CD8-positive, alpha-beta memory T cell (primary cell): ENCODE measurements at regions of chr19 and their contacts with region 1.

Region 1: DNA sequence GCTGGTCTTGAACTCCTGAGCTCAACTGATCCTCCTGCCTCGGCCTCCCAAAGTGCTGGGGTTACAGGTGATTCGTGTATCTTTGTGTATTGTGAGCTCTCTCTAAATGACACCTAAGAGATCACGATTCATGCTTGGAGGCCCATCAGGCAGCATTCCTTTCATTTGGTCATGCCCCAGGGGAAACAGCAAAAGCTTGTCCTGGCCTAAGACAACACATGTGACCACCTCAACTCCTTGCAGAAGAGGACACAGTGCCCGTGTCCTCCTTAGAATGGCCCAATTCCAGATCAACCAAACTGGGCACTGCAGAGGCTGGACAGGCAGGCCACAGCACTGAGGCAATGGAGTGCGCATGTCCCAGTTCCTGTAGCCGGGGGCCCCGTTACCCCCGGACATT is 32.5 kb downstream of the ZC3H4 start:
- DNase-seq: no peak
- H3K4me3 ChIP-seq: no peak overlapping the region
- H3K4me3 Mint-ChIP-seq: no peak overlapping the region
- H3K27ac ChIP-seq: no peak overlapping the region
- H3K27ac Mint-ChIP-seq: peak overlapping the region in 2 of 8 donors; percentile 35 to 46
- H3K4me1 ChIP-seq: no peaks in the 10 kb centered on the region
- H3K4me1 Mint-ChIP-seq: no peaks in the 10 kb centered on the region
- H3K27me3 ChIP-seq: no peaks in the 10 kb centered on the region
- H3K27me3 Mint-ChIP-seq: no peaks in the 10 kb centered on the region

Region 2: GRCh38 chr19:47124937-47125668 is 44.0 kb after region 1 on chr19:
- CTCF ChIA-PET with region 1: interaction called, 87 read pairs
- POLR2A ChIA-PET with region 1: interaction called, 3 read pairs
- DNase-seq: peak in 2 of 5 donors; percentile 39 to 52
- H3K4me3 ChIP-seq: no peak overlapping the region
- H3K4me3 Mint-ChIP-seq: peak overlapping the region in 1 of 7 donors; percentile 72
- H3K27ac ChIP-seq: no peak overlapping the region
- H3K27ac Mint-ChIP-seq: peak overlapping the region in 2 of 8 donors; percentile 26 to 57
- H3K4me1 ChIP-seq: no peaks in the 10 kb centered on the region
- H3K4me1 Mint-ChIP-seq: peaks cover 0 to 6% (median 6%) of the 10 kb centered on the region in 3 donors
- H3K27me3 ChIP-seq: no peaks in the 10 kb centered on the region
- H3K27me3 Mint-ChIP-seq: no peaks in the 10 kb centered on the region

Region 3: DNA sequence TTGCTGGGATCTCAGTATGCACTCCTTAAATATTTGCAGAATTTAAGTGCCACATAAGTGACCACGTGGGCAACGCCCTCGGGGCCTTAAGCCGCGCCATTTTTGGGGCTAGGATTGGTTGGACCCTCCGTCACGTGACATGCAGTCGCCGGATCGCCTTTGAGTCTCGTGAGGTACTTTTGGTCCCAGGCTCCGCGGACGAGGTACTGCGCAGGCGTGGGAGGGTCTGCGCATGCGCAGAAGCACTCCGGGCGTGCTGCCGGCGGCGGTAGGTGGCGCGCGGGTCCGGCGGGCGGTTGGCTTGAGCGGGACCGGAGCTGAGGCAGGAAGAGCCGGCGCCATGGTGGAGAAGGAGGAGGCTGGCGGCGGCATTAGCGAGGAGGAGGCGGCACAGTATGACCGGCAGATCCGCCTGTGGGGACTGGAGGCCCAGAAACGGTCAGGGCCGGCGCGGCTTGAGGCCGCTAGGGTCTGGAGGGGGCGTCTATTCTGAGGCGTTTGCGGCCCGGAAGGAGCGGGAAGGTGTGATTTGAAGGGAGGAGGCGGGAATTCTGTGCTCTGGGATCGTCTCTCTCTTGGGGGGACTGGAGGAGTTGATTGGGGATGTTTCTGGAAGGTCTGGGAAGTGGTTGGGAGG is 49.6 kb after region 1 on chr19 and contains the start of gene SAE1:
- CTCF ChIA-PET with region 1: interaction called, 87 read pairs
- POLR2A ChIA-PET with region 1: interaction called, 3 read pairs
- DNase-seq: peak; percentile 85 to 94 (median 89)
- H3K4me3 ChIP-seq: peak within 1 kb of the TSS; percentile 97
- H3K4me3 Mint-ChIP-seq: peak within 1 kb of the TSS; percentile 96 to 100 (median 98)
- H3K27ac ChIP-seq: peak within 1 kb of the TSS; percentile 90
- H3K27ac Mint-ChIP-seq: peak within 1 kb of the TSS; percentile 74 to 99 (median 96)
- H3K4me1 ChIP-seq: peaks cover 33% of the 10 kb centered on the region
- H3K4me1 Mint-ChIP-seq: peaks cover 39 to 57% (median 52%) of the 10 kb centered on the region in 3 donors
- H3K27me3 ChIP-seq: no peaks in the 10 kb centered on the region
- H3K27me3 Mint-ChIP-seq: peaks cover 0 to 8% of the 10 kb centered on the region in 2 donors
- total RNA-seq, gene SAE1: 167 to 172 TPM